ENCODE measurements at regions of chr2 and their contacts with region 1.

Region 1: DNA sequence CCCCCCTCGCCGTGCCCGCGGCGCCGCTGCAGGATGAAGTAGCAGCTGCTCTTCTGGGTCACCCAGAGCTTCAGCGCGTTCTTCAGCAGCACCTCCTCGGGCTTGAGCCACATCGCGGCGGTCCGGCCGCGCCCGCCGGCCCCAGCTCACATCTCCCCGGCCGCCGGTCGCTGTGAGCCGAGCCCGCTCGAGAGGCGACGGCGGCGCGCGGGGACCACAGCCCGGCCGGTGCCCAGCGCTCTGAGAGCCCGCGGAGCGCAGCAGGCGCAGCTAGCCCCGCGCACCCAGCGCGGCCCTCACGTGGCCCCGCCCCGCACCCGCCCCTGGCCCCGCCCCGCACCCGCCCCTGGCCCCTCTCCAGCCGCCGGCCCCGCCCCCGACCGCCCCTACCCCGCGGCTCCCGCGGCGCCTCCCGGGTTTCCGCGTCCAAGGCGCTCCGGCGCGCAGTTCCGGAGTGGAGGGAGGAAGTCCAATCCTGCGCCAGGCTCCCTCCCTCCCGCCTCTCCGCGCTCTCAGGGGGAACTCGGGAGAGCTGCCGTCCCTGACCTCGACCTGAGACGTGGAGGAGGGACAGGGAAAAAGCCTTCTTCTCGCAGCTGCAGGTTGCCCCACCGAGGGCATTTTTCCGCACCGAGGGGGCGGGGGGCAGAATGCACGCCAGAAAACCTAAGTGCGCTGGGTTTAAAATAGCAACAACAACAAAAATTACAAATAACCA is at the start of gene TBC1D8:
- DNase-seq: peak; percentile 55 to 86 (median 74)
- H3K4me3 ChIP-seq: peak within 1 kb of the TSS; percentile 51 to 85 (median 72)
- H3K27ac ChIP-seq: peak within 1 kb of the TSS in 56 of 59 donors; percentile 13 to 90 (median 75)
- H3K27me3 ChIP-seq: no peaks in the 10 kb centered on the region
- CTCF ChIP-seq: peak in 9 of 56 donors; percentile 0 to 24 (median 14)
- total RNA-seq, gene TBC1D8: 10.5 to 33.3 (median 21.0) TPM

Region 2: DNA sequence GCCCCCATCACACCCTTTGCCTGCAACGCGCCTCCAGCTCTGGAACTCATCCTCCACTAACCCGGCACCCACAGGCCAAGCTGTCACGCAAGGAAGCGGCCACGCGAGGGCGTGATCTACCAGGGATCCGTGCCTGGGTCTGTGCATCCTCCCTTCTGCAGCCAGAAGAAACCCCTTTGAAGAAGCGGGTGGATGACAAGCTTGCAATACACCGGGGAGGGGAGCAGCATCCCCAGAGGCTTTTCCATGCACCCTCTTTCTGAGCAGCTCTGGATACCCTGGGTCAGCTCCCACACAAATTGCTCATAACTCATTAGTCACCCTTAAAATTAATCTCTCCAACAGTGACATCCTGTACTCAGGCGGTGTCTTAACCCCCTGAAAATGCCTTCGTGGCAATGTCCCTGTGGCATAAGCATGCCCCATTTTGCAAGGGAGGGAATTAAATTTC is 540.9 kb before region 1 on chr2:
- intact Hi-C with region 1: loop called (anchors 5 to 10 kb)
- DNase-seq: peak; percentile 54 to 92 (median 88)
- H3K4me3 ChIP-seq: no peak overlapping the region
- H3K27ac ChIP-seq: peak overlapping the region in 1 of 59 donors; percentile 45
- H3K27me3 ChIP-seq: no peaks in the 10 kb centered on the region
- CTCF ChIP-seq: peak; percentile 24 to 87 (median 74)

Region 3: DNA sequence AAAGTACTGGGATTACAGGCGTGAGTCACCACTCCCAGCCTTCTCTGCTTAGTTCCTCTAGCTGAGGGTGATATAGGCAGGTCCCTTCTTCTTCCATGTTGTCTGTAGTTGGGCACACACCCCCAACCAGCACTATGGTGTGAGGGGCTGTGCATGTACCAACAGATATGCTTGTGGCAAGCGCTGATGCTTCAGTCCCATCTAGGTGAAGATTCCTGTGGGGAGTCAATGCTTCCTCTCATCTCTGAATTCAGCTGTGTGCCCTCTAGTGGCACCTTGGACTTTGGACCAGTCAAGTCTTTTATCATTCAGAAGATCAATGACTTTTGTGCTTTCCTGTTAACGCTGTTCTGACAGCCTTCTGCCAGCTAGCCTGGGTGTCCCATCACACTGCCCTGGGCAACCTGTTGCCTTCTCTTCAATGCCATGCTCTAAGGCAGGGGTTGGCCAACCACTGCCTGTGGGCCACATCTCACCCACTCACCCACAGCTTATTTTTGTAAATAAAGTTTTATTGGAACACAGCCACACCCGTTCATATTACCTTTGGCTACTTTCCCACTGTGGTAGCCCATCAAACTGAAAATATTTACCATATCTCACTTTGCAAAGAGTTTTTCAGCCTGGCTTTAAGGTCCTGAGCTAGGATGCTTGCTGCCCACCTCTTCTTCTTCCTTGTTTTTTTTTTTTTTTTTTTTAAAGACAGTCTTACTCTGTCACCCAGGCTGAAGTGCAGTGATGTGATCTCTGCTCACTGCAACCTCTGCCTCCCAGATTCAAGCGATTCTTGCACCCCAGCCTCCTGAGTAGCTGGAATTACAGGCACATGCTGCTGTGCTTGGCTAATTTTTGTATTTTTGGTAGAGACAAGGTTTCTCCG is 280.4 kb before region 1 on chr2:
- intact Hi-C with region 1: no loop called
- DNase-seq: no peak
- H3K4me3 ChIP-seq: no peak overlapping the region
- H3K27ac ChIP-seq: no peak overlapping the region
- H3K27me3 ChIP-seq: no peaks in the 10 kb centered on the region
- CTCF ChIP-seq: peak in 4 of 56 donors; percentile 5 to 19 (median 16)

Measured in dorsolateral prefrontal cortex (tissue), 120 donors.